Lower leg skin (tissue), 4 donors: ENCODE measurements at regions of chr16 and their contacts with region 1.

Region 1: GRCh38 chr16:73196670-73197069 is 148.7 kb upstream of the ZFHX3 start:
- DNase-seq: peak in 1 of 2 donors; percentile 62
- H3K4me3 ChIP-seq: no peak overlapping the region
- CTCF ChIP-seq: no peak
- POLR2A ChIP-seq: no peak

Region 2: GRCh38 chr16:72832621-72833248 is 363.9 kb before region 1 on chr16:
- intact Hi-C with region 1: loop called (anchors 10 kb)
- DNase-seq: peak; percentile 80 to 97
- H3K4me3 ChIP-seq: no peak overlapping the region
- CTCF ChIP-seq: peak in 1 of 3 donors; percentile 69
- POLR2A ChIP-seq: no peak